Mammary epithelial cell (primary cell): ENCODE measurements at regions of chr20 and their contacts with region 1.

Region 1: GRCh38 chr20:50484276-50484976 is 25.8 kb upstream of the PTPN1 start:
- DNase-seq: peak; percentile 43
- H3K4me3 ChIP-seq: peak overlapping the region; percentile 18 to 52 (median 42)
- H3K27ac ChIP-seq: peak overlapping the region; percentile 82
- H3K4me1 ChIP-seq: peaks cover 12% of the 10 kb centered on the region
- H3K27me3 ChIP-seq: no peaks in the 10 kb centered on the region
- CTCF ChIP-seq: peak; percentile 38 to 52

Region 2: DNA sequence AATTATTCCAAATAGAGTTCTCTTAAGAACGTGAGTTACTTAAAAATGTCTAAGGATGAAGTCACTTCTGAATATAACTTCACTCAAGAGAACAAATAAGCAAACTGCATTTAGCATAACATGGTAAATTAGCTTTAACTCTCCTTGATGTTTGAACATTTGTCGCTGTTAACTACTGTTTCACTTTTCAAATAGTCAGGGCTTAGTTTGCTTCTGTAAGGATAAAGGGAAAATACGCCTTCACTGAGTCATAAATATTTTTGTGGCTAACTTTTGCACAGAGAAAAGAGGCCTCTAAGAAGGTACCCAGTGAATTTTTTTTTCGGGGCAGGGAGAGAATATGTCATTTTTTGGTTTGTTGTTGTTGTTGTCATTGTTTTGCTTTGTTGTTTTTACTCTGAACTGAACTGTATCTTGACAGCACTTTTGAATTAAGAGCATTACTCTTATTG is 33.9 kb after region 1 on chr20:
- CTCF ChIA-PET with region 1: no interaction called
- dilution Hi-C with region 1: loop called (anchors 5 kb)
- in situ Hi-C with region 1: no loop called
- intact Hi-C with region 1: loop called (anchors 5 kb)
- DNase-seq: peak; percentile 28
- H3K4me3 ChIP-seq: no peak overlapping the region
- H3K27ac ChIP-seq: peak overlapping the region; percentile 21
- H3K4me1 ChIP-seq: peaks cover 59% of the 10 kb centered on the region
- H3K27me3 ChIP-seq: no peaks in the 10 kb centered on the region
- CTCF ChIP-seq: no peak

Region 3: GRCh38 chr20:50569864-50570836 is 85.7 kb after region 1 on chr20:
- CTCF ChIA-PET with region 1: interaction called, 3 read pairs
- dilution Hi-C with region 1: no loop called
- in situ Hi-C with region 1: loop called (anchors 10 kb)
- intact Hi-C with region 1: loop called (anchors 2 kb)
- DNase-seq: no peak
- H3K4me3 ChIP-seq: no peak overlapping the region
- H3K27ac ChIP-seq: no peak overlapping the region
- H3K4me1 ChIP-seq: no peaks in the 10 kb centered on the region
- H3K27me3 ChIP-seq: no peaks in the 10 kb centered on the region
- CTCF ChIP-seq: peak in 1 of 2 donors; percentile 34

Region 4: GRCh38 chr20:50575847-50576720 is 91.7 kb after region 1 on chr20:
- CTCF ChIA-PET with region 1: interaction called, 3 read pairs
- dilution Hi-C with region 1: no loop called
- in situ Hi-C with region 1: loop called (anchors 10 kb)
- intact Hi-C with region 1: loop called (anchors 2 kb)
- DNase-seq: no peak
- H3K4me3 ChIP-seq: no peak overlapping the region
- H3K27ac ChIP-seq: no peak overlapping the region
- H3K4me1 ChIP-seq: no peaks in the 10 kb centered on the region
- H3K27me3 ChIP-seq: no peaks in the 10 kb centered on the region
- CTCF ChIP-seq: peak; percentile 57 to 75

Region 5: DNA sequence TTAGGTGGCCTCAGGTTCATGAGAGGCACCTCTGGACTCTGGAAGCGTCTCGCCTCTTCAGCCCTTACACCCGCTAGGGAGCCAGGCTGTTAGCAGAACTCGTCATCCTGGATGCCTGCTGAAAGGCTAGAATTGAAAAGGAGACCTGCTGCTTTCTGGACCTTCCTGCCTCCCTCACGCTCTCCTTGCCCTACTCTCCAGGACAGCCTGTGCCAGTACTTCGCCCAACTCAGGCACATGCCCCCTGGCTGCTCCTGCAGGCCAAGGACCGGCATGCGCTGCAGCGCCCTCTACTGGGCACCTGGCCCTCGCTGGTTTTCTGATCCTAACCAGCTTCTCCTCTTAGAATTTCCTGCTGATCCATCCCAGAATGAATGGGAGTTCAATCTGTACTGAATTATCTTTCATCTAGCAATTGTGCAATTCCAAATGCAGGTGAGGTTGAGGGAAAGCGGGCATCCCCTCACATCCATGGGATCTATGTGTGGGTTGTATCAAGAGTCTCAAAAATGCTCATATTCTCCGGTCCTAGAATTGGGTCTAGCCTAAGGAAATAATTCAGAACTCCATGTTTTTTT is 103.7 kb after region 1 on chr20:
- CTCF ChIA-PET with region 1: interaction called, 5 read pairs
- dilution Hi-C with region 1: loop called (anchors 5 kb)
- in situ Hi-C with region 1: no loop called
- intact Hi-C with region 1: no loop called
- DNase-seq: peak; percentile 54
- H3K4me3 ChIP-seq: no peak overlapping the region
- H3K27ac ChIP-seq: no peak overlapping the region
- H3K4me1 ChIP-seq: peaks cover 25% of the 10 kb centered on the region
- H3K27me3 ChIP-seq: no peaks in the 10 kb centered on the region
- CTCF ChIP-seq: peak; percentile 96 to 99

Region 6: GRCh38 chr20:50824193-50824632 is 339.8 kb after region 1 on chr20:
- CTCF ChIA-PET with region 1: no interaction called
- dilution Hi-C with region 1: no loop called
- in situ Hi-C with region 1: no loop called
- intact Hi-C with region 1: no loop called
- DNase-seq: no peak
- H3K4me3 ChIP-seq: no peak overlapping the region
- H3K27ac ChIP-seq: no peak overlapping the region
- H3K4me1 ChIP-seq: peaks cover 4% of the 10 kb centered on the region
- H3K27me3 ChIP-seq: no peaks in the 10 kb centered on the region
- CTCF ChIP-seq: no peak